Heart left ventricle (tissue), 16 donors: ENCODE measurements at regions of chr7 and their contacts with region 1.

Region 1: DNA sequence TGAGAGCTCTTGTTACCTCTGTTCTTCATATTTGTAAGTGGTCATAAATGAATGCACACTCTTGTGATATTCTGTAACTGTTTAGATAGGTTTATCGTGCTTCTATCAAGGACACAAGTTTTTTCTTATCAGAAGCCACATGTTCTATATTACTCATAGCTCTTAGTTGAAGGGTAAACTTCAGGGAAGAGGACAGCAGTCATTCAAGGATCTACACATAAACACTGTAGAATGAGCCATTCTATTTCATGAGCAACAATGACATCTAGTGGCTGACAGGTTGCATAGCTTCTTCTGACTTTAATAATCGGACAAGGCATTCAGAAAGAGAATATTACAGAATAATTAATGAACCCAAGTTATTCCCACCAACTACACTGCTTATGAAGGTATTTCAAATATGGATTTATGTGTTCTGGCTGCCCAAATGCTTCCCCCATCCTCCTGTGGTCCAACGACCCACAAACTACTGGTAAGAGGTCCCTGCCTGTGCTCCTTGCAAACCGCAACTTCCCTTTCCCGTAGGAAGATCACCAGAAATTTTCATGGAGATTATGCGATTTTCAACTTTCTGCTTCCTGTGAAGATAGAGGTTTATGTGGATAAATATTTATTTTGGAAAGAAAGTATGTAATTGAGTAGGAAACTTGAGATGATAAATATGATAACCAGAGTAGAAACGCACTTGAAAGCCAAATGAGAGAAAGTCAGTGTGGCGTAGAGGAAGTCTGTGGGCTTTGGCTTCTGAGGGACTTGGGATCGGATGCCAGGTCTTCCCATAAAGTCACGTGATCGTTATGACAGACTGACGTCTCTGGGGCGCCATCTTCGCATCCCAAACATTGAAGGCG is 16.8 kb upstream of the ABCB5 start:
- DNase-seq: no peak
- ATAC-seq: peak in 3 of 4 donors; percentile 62 to 82 (median 69)
- H3K4me3 ChIP-seq: peak overlapping the region in 5 of 12 donors; percentile 3 to 39 (median 14)
- H3K27ac ChIP-seq: no peak overlapping the region
- H3K4me1 ChIP-seq: no peaks in the 10 kb centered on the region
- H3K27me3 ChIP-seq: peaks cover 0 to 19% (median 0%) of the 10 kb centered on the region in 9 donors
- CTCF ChIP-seq: peak; percentile 64 to 87 (median 78)
- POLR2A ChIP-seq: no peak

Region 2: DNA sequence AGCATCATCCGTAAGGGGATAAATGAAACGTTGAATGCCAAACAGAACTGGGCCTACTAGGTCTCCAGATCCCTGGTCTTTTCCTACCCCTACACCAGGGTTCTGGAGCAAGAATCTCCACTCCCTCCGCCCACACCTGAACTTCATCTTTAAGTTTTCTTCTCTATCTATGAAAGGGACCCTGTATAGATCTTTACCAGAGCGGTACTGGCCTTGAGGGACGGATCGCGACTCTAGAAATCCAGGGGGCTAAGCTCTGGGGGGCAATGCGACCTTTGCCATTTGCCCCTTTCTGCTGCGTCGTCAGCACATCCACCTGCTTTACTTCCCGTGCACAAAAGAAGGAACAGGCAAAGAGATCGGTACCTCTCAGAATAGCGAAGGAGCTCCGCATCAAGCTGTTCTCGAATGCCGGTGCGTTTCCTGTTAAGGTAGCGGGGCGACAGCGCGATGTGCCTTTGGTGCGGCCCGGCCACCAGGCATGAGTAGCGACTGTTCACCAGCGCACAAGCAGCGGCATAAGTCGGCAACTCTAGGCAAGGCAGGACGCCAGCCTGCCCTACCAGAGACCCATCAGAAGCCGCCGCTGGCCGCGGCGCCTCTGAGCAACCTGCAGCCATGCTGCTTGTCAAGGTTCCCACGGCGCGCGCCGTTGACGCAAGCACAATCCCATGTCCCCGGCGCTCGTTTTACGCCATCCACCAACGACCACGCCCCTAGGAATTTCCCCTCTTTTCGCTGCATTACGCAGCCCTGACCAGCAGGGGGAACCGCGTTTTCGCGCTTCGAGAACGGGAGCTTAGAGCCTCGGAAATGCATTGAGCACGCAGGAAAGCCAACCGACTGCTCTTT is 890.1 kb before region 1 on chr7 and contains the start of gene POLR1F:
- intact Hi-C with region 1: loop called in 8 of 10 experiments (anchors 2 to 10 kb)
- DNase-seq: peak; percentile 93 to 97 (median 95)
- ATAC-seq: peak; percentile 100
- H3K4me3 ChIP-seq: peak within 1 kb of the TSS; percentile 69 to 96 (median 84)
- H3K27ac ChIP-seq: peak within 1 kb of the TSS in 11 of 12 donors; percentile 17 to 86 (median 56)
- H3K4me1 ChIP-seq: peaks cover 0 to 29% (median 18%) of the 10 kb centered on the region in 12 donors
- H3K27me3 ChIP-seq: no peaks in the 10 kb centered on the region
- CTCF ChIP-seq: peak; percentile 84 to 97 (median 92)
- POLR2A ChIP-seq: peak in 1 of 2 donors; percentile 75
- total RNA-seq, gene POLR1F: 6.5 to 12.4 (median 10.3) TPM

Region 3: GRCh38 chr7:19747740-19748339 is 850.8 kb before region 1 on chr7:
- intact Hi-C with region 1: loop called (anchors 2 to 10 kb)
- DNase-seq: no peak
- ATAC-seq: no peak
- H3K4me3 ChIP-seq: no peak overlapping the region
- H3K27ac ChIP-seq: no peak overlapping the region
- H3K4me1 ChIP-seq: no peaks in the 10 kb centered on the region
- H3K27me3 ChIP-seq: peaks cover 0 to 10% (median 0%) of the 10 kb centered on the region in 9 donors
- CTCF ChIP-seq: peak in 11 of 12 donors; percentile 24 to 62 (median 44)
- POLR2A ChIP-seq: no peak

Region 4: DNA sequence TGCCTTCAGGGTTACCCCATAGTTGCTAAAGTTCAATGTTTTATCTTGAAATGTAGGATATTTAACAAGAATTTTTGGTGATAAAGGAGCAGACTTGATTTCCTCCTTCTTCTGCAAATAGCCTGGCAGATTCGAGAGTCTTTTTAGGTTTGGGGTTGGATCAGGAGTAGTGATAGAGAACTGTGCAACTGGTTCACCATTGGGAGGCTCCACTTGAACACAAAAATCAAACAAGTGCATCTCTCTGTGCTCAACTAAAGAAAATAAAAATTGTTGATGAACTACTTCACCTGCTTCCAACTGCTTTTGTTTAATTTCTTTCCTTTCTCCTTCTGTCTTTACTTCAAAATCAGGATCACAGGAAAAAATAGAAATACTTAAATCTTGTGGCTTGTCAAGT is 440.0 kb before region 1 on chr7:
- intact Hi-C with region 1: loop called in 9 of 10 experiments (anchors 2 to 5 kb)
- DNase-seq: no peak
- ATAC-seq: peak in 3 of 4 donors; percentile 54 to 81 (median 75)
- H3K4me3 ChIP-seq: no peak overlapping the region
- H3K27ac ChIP-seq: no peak overlapping the region
- H3K4me1 ChIP-seq: peaks cover 0 to under 1% (median 0%) of the 10 kb centered on the region in 12 donors
- H3K27me3 ChIP-seq: no peaks in the 10 kb centered on the region
- CTCF ChIP-seq: peak in 10 of 12 donors; percentile 29 to 60 (median 48)
- POLR2A ChIP-seq: no peak

Region 5: DNA sequence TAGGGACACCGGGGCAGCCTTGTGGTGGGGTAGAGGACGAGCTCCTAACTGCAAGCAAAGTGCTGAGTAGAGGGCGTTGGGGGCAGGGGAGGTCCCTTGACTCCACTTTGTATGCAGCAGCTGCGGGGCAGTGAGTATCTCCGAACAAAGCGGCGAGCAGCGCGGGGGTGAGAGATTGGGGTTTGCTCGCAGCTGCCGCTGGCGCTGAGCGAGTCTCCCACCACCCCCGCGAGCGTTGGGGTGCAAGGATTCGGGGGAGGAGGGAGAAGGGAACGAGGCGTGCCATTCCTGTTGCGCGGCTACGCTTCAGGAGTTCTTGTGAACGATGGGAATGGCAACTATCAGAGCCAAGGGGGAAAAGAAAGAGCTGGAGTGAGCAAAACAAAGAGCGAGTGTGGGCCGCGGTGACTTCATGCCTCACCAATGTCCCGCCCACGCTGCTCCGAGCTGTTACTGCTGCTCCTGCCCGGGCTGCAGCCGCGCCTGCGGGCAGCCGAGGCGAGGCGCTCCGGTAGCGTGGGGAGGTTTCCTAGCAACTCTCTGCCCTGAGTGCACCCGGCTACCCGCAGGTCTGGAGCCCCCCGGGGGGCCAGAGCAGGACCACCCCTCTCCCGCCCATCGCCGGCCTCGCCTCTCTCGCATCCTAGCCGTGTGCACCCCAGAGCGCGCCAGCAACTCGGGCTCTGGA is 268.3 kb before region 1 on chr7 and contains the start of gene ITGB8:
- intact Hi-C with region 1: loop called in 1 of 10 experiments (anchors 10 kb)
- DNase-seq: peak; percentile 82 to 90 (median 88)
- ATAC-seq: peak; percentile 82 to 95 (median 94)
- H3K4me3 ChIP-seq: peak within 1 kb of the TSS; percentile 55 to 77 (median 66)
- H3K27ac ChIP-seq: peak within 1 kb of the TSS; percentile 58 to 91 (median 78)
- H3K4me1 ChIP-seq: peaks cover 0 to 21% (median 6%) of the 10 kb centered on the region in 12 donors
- H3K27me3 ChIP-seq: peaks cover 0 to 18% (median 4%) of the 10 kb centered on the region in 9 donors
- CTCF ChIP-seq: no peak
- POLR2A ChIP-seq: no peak
- total RNA-seq, gene ITGB8: 0.93 to 16.0 (median 2.7) TPM